AG04449 (cell line): ENCODE measurements at regions of chr12 and their contacts with region 1.

Region 1: DNA sequence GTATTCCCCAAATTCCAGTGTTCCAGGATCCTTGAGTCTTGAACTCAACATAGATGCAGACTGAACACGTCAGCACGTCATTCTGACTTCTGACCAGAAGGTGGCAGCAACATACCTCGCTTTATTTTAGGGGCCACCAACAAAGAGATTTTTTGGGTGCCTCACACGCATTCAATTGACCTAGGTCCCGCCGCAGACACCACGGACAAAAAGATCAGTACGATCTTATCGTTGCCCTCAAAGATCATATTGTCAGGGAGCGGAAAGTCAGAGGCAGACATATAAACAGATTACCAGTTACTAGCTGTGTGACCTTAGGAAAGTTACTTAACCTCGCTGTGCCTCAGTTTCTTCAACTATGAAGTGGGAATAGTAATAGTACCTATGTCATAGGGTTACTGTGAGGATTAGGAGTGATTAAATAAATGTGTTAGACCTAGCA is 6.5 kb upstream of the PRPH start:
- DNase-seq: no peak
- H3K4me3 ChIP-seq: no peak overlapping the region
- CTCF ChIP-seq: peak; percentile 68

Region 2: GRCh38 chr12:49264738-49265515 is 23.5 kb before region 1 on chr12 and contains the start of gene TUBA1C:
- CTCF ChIA-PET with region 1: interaction called, 31 read pairs
- POLR2A ChIA-PET with region 1: interaction called, 3 read pairs
- DNase-seq: no peak
- H3K4me3 ChIP-seq: peak within 1 kb of the TSS; percentile 94
- CTCF ChIP-seq: no peak

Region 3: DNA sequence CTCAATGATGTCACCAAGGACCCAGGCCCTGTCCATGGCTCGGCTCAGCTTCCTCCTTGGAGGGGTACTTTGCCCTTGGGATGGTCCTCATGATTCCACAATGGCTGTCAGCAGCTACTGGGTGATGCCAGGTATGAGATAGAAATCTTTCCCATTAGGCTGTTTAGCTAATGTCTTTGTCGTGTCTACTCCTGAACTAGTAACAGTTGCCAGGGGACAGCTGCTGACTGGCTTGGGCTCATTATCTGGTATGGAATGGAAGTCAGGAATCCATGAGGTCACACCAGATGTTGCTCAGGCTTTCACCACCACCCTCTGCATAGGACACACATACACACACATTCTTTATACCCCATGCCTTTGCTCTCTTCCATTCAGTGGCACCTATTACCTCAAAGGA is 15.7 kb after region 1 on chr12:
- CTCF ChIA-PET with region 1: interaction called, 25 read pairs
- POLR2A ChIA-PET with region 1: no interaction called
- DNase-seq: peak; percentile 21
- H3K4me3 ChIP-seq: no peak overlapping the region
- CTCF ChIP-seq: no peak

Region 4: DNA sequence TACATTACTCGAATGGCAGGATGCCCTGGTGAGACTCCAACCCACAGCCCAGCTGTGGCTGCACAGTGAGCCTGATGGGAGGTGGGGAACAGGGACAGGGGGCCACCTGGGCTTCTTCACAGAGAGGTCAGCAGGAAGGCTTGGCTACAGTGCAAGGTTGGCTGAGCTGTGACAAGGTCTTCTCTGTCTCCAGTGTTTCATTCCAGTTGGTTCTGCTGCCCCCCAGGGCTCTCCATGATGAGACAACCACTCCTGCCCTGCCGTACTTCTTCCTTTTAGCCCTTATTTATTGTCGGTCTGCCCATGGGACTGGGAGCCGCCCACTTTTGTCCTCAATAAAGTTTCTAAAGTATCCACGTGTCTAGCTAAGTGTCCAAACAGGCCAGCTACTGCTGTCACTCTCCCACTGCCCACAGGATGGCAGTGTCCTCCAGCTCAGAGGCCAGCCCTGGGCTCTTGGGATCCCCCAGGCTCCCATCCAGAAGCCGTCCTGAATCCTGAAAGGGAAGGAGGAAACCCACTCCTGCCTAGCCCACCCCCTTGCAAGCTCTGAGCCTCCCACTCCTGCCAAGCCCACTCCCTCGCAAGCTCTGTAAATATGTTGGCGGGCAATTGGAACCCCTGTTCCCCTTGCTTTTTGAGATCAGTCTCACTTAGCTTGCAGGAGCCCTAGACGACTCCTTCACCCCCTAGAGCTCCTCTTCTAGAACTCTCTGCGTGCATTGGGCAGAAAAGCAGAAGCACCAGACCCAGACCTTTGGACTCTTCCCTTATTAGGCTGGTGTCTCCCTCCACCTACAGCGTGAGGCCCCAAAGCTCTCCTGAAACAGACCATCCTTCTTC is 43.2 kb after region 1 on chr12:
- CTCF ChIA-PET with region 1: interaction called, 32 read pairs
- POLR2A ChIA-PET with region 1: no interaction called
- DNase-seq: no peak
- H3K4me3 ChIP-seq: no peak overlapping the region
- CTCF ChIP-seq: peak; percentile 84

Region 5: GRCh38 chr12:49342066-49342913 is 53.9 kb after region 1 on chr12:
- CTCF ChIA-PET with region 1: interaction called, 289 read pairs
- POLR2A ChIA-PET with region 1: no interaction called
- DNase-seq: no peak
- H3K4me3 ChIP-seq: peak overlapping the region; percentile 45
- CTCF ChIP-seq: peak; percentile 67

Region 6: GRCh38 chr12:49515266-49515665 is 226.8 kb after region 1 on chr12:
- CTCF ChIA-PET with region 1: interaction called, 27 read pairs
- POLR2A ChIA-PET with region 1: no interaction called
- DNase-seq: no peak
- H3K4me3 ChIP-seq: no peak overlapping the region
- CTCF ChIP-seq: no peak